GM10248 (cell line): ENCODE measurements at regions of chr2 and their contacts with region 1.

Region 1: DNA sequence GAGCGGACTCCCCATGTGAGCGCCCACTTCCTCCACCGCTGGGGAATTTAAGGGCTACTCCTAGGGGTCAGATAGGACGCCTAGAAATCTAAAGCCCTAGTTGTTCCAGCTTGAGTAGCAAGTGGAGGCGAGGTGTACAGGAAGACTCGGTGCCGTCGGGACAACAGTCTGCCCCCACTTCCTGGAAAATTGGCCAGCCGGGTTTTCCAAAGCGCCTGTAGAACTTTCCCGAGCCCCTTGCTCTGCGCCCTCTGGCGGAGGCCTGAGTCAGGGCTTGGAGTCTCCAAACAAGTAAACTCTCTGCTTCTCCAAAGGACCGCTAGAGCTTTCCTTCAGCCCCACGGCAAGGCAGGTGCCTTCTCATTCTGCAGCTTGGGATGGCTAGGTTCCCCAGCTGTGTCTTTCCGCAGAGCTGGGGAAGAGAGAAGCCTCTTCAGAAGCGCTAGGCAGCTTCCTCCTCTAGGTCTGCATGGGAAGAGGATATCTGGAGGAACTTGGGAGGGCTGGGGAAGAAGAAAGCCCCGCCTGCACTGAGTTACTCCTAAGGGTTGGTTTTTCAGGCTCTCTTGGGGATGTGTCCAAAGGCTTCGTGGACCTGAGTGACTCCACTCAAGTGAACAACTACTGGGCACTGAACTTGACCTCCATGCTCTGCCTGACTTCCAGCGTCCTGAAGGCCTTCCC is 688 bp downstream of the SPR start:
- DNase-seq: peak; percentile 68
- CTCF ChIP-seq: peak; percentile 86

Region 2: DNA sequence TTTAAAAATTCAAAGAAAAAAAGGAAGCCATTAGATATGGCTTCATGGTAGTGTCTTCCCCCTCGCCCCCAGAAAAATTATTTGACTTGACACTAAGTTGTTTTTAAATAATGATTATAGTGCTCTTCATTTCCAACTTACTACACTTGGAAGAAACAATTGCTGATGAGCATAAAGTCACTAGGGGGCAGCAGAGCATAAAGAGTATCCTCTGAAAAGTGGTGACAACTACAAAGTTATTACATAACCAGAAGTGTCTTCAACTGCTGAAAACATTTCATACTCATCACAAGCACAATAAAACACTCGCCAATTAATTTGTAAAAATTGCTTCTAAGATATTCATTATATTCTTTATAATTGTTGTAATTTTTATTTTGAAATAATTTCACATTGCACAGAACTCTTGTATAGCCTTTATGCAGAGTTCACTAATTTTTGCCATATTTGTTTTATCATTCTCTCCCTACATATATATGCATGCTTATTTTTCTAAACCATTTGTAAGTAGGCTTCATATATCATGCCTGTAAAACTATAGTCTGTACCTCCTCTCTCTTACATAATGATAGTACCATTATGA is 116.9 kb before region 1 on chr2:
- CTCF ChIA-PET with region 1: interaction called, 16 read pairs
- POLR2A ChIA-PET with region 1: no interaction called
- DNase-seq: peak; percentile 69
- CTCF ChIP-seq: peak; percentile 70

Region 3: GRCh38 chr2:72901426-72901825 is 13.5 kb after region 1 on chr2:
- CTCF ChIA-PET with region 1: interaction called, 25 read pairs
- POLR2A ChIA-PET with region 1: no interaction called
- DNase-seq: no peak
- CTCF ChIP-seq: no peak

Region 4: DNA sequence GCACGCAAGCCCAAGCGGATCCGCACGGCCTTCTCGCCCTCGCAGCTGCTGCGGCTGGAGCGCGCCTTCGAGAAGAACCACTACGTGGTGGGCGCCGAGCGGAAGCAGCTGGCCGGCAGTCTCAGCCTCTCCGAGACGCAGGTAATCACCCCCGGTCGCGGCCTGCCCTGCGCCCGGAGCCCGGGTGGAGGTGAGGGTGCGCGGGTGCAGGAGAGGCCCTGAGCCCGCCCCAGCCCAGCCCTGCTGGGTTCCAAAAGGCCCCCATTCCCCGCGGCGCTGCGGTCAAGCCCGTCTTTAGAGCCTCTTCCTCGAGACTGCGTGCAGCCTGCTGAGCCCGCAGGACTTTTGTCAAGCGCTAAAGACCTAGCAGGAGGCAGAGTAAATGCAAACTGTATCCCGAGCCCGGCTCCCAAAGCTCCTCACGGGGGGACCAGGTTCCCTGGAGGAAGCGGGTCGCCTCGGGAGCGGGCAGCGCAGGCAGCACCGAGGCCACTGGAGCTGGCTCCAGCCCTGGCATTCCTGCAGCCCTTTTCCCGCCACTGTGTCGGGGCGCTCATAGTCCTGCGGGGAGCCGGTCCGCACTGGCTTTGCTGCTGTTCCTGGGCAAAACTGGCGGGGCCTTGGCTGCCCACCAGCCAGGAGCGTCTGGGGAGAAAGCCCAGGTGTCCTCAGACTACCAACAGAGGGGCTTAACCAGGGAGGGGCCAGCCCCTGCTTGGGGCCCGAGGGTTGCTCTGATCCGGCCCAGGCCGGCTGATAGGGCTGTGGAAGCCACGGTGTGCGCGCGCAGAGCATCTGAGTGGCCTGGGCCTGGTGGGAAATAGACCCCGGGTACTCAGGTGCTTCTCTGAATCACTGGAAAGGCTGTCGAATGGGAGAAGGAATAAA is 36.7 kb after region 1 on chr2:
- CTCF ChIA-PET with region 1: interaction called, 35 read pairs
- POLR2A ChIA-PET with region 1: no interaction called
- DNase-seq: no peak
- CTCF ChIP-seq: no peak

Region 5: DNA sequence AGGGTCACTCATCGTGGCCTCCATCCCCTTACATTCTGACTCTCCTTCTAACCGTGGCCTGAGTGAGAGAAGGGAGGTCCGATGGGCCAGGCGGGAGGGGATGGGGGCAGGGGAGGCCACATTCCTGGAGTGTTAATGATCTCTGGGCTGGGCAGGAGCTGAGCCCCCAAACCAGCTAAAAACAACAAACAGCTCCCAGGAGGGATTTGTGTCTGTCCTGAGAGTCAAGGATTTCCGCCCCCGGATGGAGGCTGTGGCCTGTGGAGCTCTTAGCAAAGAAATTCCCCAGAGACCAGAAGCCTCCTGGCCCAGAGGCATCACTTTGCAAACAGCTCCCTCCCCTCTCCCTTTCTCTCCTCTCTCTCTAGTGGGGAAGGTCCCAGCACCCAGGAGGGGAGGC is 52.9 kb after region 1 on chr2:
- CTCF ChIA-PET with region 1: interaction called, 85 read pairs
- POLR2A ChIA-PET with region 1: no interaction called
- DNase-seq: no peak
- CTCF ChIP-seq: no peak

Region 6: DNA sequence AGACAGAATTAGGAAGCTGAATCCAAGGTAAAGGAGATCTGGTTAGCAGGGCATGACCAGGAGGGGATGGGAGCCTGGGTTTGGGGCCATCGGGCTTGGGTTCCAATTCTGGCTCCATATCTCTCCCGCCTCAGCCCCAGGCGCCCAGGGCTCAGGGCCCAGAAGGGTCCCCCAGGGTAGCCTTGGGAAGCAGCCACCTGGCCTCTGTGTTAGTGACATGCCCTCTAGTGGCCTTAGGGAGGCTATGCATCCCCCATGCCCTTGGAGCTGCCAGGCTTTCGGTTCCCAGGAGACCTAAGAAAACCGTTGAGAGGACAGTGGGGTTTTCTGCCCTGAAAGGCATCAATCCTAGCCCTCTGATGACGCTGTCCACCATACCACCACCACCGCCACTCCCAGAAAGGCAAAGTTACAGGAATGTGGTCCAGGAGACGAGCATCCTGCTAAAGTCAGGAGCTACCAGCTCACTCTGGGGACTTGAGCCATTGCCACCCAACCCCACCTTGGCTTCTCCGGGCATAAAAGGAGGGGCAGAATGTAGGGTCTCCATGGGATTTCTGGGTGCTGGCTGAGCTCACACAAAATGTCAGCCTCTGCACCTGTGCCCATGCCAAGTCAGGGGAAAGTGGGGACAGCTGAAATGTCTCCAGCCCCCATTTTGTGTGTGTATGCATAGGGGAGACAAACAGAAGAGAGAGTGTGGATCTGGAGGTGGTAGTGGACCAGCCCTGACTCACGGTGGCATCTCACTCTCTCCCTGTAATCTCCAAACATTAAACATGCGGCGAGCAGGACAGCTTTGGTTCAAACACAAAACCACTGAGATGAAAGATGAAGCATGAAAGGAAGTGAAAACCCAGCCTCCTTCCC is 85.9 kb after region 1 on chr2:
- CTCF ChIA-PET with region 1: interaction called, 150 read pairs
- POLR2A ChIA-PET with region 1: no interaction called
- DNase-seq: peak; percentile 84
- CTCF ChIP-seq: peak; percentile 85

Region 7: DNA sequence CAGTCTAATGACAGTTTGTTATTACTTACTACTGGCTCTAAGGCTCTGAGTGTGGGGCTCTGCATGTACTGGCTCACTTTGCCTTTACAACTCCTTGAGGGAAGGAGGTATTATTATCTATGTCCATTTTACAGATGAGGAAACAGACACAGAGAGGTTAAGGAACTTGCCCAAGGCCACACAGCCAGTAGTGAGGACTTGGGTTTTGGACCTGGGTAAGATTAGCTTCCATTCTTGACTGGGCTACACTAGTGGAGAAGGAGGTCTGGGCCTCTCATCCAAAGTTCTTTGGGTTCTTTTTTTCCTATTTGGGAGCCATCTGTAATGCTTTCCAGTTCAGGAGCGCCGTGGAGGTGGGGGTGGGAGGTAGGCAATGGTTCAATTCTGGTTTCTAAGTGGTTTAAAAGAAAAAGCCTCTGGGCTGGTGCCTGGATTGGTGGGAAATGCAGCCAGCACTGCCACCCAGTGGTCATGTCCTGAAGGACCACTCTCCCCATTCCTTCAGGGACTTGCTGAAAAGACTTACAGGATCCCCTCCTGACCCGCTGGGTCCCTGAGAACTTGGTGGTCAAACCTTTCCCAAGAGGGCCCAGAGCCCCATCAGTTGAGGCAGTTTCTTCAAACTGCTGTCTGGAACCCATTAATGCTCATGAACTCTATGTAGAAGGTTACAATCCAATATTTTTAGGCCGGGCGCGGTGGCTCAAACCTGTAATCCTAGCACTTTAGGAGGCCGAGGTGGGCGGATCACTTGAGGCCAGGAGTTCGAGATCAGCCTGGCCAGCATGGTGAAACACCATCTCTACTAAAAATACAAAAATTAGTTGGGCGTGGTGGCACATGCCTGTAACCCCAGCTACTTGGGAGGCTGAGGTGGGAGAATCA is 275.8 kb after region 1 on chr2:
- CTCF ChIA-PET with region 1: interaction called, 15 read pairs
- POLR2A ChIA-PET with region 1: no interaction called
- DNase-seq: peak; percentile 81
- CTCF ChIP-seq: peak; percentile 88